Cardiac septum (tissue), 1 donor: ENCODE measurements at regions of chr1 and their contacts with region 1.

Region 1: DNA sequence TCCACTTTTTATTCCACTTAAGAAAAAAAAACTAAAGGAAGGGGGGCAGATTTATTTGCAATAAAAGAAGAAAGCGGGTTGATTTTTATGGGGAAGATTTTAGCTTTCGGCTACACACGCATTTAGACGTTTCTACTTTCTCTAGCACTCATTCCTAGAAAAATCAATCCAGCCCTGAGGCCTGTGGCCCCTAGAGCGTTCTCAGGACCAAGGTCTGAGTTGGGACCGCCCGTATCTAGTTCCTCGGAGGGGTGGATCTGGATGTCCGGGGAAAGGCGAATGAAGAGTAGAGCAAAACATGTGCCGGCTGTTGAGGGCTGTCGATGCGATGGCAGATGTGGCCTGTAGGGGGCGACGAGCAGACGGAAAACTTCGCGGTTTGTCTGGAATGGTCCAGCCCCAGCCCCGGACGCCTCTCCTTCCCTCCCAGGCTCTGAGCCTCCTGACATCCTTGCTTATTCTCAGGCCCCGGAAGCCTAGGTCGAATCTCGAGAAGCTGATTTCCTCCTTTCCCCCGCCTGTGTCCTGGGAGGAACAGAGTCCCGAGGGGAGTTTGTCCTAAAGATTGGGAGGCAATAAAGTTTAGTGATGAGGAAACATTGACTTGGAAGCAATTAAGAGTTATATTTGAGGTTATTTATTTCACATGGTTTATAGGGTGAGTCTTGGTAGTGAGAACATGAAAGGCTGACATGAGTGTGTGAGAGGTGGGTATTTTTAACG is 5.2 kb downstream of the FOXD3 start:
- DNase-seq: peak; percentile 82

Region 2: DNA sequence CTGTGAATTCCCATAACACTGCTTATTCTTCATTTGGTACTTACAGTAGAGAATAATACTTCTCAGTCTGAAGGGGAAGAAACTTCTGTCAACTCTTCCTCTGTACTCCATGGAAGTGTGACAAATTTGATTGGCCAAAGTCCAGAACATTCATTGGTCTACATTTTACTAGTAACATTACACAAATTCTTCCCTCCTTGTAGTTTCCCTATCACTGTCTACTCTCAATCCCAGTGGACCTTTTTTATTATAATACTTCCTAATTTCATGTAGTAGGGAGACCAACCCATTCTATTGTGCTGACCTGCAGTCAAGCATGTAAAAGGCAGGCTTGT is 114.5 kb after region 1 on chr1:
- intact Hi-C with region 1: loop called (anchors 5 kb)
- DNase-seq: no peak

Region 3: DNA sequence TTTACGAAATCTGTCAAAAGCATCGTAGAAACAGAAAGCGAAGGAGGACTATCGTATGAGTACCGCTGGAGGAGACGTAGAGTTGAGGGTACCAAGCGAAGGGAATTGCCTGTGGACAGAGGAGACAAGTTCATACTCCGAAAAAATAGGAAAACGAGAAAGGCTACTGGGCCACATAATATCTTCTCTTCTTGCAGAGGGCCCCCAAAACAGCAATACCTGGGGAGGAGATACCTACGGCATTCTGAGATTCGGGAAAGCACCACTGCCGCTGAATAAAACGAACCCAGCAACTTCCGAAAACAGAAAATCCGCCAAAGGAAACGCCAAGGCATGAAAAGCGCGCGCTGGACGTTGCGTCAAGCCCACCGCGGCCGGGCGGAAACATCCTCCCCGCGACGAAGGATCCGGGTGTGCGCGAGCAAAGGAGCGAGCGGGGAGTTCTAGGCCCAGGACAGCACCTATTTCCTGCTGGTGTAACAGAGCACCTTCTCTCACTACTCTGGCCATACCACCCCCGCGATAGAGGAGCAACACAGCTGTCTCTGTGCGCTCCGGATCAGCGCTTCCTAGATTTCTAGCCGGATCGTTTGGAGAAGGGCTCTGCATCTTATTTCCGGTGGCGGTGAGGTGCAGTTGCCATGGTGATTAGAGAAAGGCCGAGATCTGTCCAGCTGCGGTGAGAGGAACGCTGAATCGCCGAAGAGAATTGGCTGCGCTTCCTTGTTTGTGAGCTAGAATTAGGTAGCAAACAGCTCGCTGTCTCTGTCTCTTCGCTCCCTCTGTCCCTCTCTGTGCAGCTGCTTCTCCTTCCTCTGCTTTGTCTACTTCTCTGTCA is 195.5 kb after region 1 on chr1 and contains the starts of genes EFCAB7 and ITGB3BP:
- intact Hi-C with region 1: loop called (anchors 10 kb)
- DNase-seq: peak; percentile 91
- total RNA-seq, gene EFCAB7: 4.5 TPM
- total RNA-seq, gene ITGB3BP: 11.1 TPM